AG04450 (cell line): ENCODE measurements at regions of chr3 and their contacts with region 1.

Region 1: DNA sequence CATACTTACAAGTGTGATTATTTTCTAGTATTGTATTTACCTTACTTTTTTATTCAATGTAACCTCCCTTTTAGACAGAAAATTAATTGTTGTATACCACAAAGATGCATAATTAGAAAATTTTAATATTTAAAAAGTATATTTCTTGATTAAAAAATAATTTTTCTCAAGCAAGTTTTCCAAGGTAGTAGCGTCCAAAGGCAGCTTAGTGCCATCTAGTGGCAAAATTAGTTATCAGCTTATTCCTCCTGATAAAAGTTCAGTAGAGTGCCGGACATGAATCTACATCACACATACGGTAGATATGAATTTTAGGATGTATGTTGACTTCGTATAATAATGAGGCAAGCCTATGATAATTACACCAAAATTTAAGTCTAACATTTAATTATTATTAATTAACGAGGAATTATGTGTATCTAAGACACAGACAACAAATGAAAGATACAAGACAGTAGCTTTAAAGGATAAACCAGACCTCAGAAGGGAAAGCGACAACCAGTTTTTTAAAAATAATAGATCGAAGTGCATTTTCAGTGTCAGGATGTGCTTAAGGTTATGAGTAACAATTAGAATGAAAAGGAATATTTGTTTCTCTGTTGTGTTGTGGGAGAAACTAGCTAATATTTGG is 405.9 kb downstream of the ROBO1 start:
- DNase-seq: peak; percentile 15
- H3K4me3 ChIP-seq: no peak overlapping the region
- H3K27ac ChIP-seq: no peak overlapping the region
- H3K27me3 ChIP-seq: no peaks in the 10 kb centered on the region
- CTCF ChIP-seq: peak; percentile 83

Region 2: DNA sequence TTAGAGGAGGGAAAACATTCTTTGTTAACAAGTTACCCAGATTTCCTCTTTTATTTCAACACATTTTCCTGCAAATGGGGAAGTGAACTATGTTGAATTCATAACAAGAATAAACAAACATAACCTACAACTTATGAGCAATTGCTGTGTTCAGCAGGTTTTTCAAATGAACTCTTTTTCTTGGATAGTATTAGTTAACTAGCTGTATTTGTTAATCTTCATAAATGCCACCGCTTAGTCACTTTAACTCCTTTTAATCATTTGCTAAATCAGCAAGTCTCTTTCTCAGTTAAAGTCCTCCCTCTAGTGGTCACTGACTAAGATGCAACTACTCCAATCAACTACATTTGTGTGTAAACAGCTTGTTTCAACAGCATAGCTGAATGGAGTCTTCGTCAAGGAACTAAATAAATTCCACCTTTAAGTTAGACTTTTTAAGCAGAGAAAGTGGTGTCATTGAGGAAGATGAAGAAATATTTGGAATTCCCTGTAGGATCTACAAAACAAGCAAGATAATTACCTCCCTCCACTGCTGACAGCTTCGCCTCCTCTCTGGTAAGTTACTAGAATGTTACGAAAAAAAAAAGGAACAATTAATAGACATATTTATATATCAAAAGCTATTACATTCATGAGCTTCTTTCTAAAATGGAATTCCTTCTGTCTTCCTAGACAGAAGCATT is 716.1 kb before region 1 on chr3:
- CTCF ChIA-PET with region 1: interaction called, 10 read pairs
- POLR2A ChIA-PET with region 1: no interaction called
- DNase-seq: peak; percentile 55
- H3K4me3 ChIP-seq: no peak overlapping the region
- H3K27ac ChIP-seq: no peak overlapping the region
- H3K27me3 ChIP-seq: no peaks in the 10 kb centered on the region
- CTCF ChIP-seq: peak; percentile 89

Region 3: GRCh38 chr3:78809966-78810365 is 551.9 kb before region 1 on chr3:
- CTCF ChIA-PET with region 1: no interaction called
- POLR2A ChIA-PET with region 1: no interaction called
- DNase-seq: no peak
- H3K4me3 ChIP-seq: no peak overlapping the region
- H3K27ac ChIP-seq: no peak overlapping the region
- H3K27me3 ChIP-seq: no peaks in the 10 kb centered on the region
- CTCF ChIP-seq: no peak

Region 4: DNA sequence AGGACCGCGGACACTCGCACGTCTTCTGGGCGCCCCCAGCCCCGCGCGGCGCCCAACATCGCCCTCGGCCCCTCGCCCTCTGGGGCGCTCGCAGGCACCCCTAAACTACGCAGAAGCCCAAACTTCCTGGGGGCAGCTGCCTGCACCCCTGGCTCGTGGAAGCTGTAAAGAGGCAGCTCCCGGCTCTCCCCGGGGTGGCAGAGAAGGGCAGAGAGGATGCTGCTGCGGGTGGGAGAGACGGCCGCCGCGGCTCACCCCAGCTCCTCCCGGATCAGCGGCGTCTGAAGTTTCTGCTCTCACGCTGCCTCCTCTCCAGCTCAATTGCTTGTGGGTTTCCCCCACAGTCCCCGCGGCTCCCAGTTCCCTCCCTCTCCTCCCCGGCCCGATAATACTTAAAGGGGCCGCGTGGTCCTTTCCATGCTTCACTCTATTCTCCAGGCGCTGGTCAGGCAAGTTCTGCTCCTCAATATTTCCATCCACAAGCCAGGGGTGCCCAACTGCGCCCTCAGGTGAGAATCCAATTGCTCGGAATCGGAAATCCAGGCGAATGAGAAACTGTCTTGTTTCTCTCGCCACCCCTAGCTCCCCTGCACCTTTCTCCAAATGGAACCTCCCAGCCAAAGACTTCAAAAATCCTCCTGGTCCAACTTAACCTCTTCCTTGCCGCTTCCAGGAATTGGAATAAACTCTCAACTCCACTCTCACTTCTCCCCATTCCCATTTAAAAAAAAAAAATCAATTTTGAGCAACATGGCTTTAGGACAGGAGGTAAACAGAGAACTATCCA is 342.5 kb before region 1 on chr3:
- CTCF ChIA-PET with region 1: interaction called, 18 read pairs
- POLR2A ChIA-PET with region 1: no interaction called
- DNase-seq: peak; percentile 77
- H3K4me3 ChIP-seq: peak overlapping the region; percentile 82
- H3K27ac ChIP-seq: peak overlapping the region; percentile 98
- H3K27me3 ChIP-seq: no peaks in the 10 kb centered on the region
- CTCF ChIP-seq: no peak

Region 5: DNA sequence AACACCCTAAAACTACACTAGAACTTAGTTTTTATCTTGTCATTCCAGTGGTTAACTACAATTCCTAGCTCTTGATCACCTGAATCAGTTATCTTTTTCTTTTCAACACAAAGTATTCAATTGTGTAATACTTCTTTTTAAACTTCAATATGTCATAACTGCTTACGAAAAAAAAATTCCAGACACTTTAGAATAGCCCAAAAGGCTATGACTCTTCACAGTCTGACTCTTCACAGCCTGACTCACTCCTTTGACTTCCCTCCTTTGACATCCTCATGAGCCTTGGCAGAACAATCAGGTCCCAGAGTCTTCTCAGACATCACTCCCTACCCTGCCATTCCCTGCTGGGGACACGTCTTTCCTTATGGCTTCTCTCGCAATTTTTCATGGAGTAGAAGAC is 321.2 kb before region 1 on chr3:
- CTCF ChIA-PET with region 1: interaction called, 14 read pairs
- POLR2A ChIA-PET with region 1: no interaction called
- DNase-seq: peak; percentile 23
- H3K4me3 ChIP-seq: no peak overlapping the region
- H3K27ac ChIP-seq: no peak overlapping the region
- H3K27me3 ChIP-seq: no peaks in the 10 kb centered on the region
- CTCF ChIP-seq: no peak

Region 6: DNA sequence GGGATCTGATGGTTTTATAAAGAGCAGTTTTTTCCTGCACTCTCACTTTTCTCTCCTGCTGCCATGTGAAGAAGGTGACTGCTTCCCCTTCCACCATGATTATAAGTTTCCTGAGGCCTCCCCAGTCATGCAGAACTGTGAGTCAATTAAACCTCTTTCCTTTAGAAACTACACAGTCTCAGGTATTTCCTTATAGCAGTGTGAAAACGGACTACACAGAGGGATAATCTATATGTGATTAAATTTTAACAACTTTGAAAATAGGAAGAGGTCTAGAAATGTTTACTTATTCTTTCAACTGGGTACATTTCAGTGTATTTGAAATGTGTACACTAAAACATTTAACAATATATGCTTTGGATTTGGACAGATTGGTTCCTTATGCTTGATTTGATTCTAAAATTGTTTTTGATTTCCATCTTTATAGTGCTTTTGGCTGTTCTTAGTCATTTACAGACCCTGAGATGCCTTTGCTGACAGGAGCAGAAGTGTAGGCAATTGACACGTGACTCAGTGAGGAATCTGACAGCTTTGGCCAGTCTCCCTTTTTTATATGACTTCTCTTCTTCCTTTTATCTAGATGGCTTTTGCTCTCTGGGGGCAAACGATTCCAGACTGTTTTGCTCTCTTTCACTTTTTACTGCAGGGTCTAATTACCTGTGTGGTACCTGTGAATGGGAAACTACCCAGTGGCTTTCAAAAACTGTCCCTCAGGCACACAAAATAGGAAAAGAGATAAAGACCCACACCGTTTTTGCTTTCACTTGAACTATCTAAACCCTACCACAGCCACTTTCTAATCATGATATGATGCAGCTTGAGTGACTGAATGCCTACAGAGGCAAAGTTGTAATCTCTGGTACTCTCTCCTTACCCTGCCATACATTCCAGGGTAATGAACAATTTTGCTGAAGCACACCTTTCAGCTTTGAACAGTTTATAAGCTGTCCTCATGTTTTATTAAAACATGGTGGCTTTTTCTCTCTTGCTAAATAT is 16.7 kb before region 1 on chr3:
- CTCF ChIA-PET with region 1: interaction called, 16 read pairs
- POLR2A ChIA-PET with region 1: no interaction called
- DNase-seq: no peak
- H3K4me3 ChIP-seq: no peak overlapping the region
- H3K27ac ChIP-seq: no peak overlapping the region
- H3K27me3 ChIP-seq: no peaks in the 10 kb centered on the region
- CTCF ChIP-seq: no peak

Region 7: DNA sequence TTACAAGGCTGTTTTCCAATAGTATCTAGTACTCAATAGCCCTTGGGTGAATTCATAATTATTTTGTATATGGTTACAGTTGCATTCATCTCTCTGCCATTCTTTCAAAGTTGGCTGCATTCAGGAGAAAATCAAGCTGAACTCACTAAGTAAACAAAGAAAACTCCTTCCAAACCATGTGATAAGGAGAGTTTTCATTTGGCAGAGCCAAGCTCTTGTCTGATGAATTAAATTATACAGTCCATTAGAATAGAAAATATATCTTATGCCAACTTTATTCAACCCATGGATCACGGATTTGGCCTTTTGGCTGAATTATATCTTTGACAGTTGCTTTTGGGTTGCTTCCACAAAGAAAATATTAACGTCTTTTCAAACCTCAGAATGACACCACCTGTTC is 678.2 kb after region 1 on chr3:
- CTCF ChIA-PET with region 1: no interaction called
- POLR2A ChIA-PET with region 1: no interaction called
- DNase-seq: no peak
- H3K4me3 ChIP-seq: no peak overlapping the region
- H3K27ac ChIP-seq: no peak overlapping the region
- H3K27me3 ChIP-seq: no peaks in the 10 kb centered on the region
- CTCF ChIP-seq: no peak